IMR-90 (cell line): ENCODE measurements at regions of chr6 and their contacts with region 1.

Region 1: GRCh38 chr6:158072083-158072721 is 90.5 kb downstream of the SYNJ2 start:
- DNase-seq: peak; percentile 76
- ATAC-seq: peak; percentile 76
- H3K4me3 ChIP-seq: no peak overlapping the region
- H3K27ac ChIP-seq: peak overlapping the region; percentile 30; the same call in 1 of the 2 replicates
- H3K4me1 ChIP-seq: peaks cover 17% of the 10 kb centered on the region
- H3K27me3 ChIP-seq: no peaks in the 10 kb centered on the region
- CTCF ChIP-seq: peak; percentile 84
- POLR2A ChIP-seq: peak; percentile 47; the same call in 1 of the 2 replicates
- RAD21 ChIP-seq: peak; percentile 95

Region 2: GRCh38 chr6:157756708-157757429 is 315.3 kb before region 1 on chr6:
- CTCF ChIA-PET with region 1: no interaction called
- POLR2A ChIA-PET with region 1: no interaction called
- dilution Hi-C with region 1: no loop called
- in situ Hi-C with region 1: loop called (anchors 5 kb)
- intact Hi-C with region 1: loop called (anchors 2 kb)
- DNase-seq: peak; percentile 73
- ATAC-seq: peak; percentile 83
- H3K4me3 ChIP-seq: no peak overlapping the region
- H3K27ac ChIP-seq: peak overlapping the region; percentile 40; the same call in 1 of the 2 replicates
- H3K4me1 ChIP-seq: peaks cover 18% of the 10 kb centered on the region
- H3K27me3 ChIP-seq: no peaks in the 10 kb centered on the region; the same call in 1 of the 2 replicates
- CTCF ChIP-seq: peak; percentile 92
- POLR2A ChIP-seq: no peak
- RAD21 ChIP-seq: peak; percentile 92

Region 3: GRCh38 chr6:157912326-157912725 is 159.9 kb before region 1 on chr6:
- CTCF ChIA-PET with region 1: no interaction called
- POLR2A ChIA-PET with region 1: no interaction called
- dilution Hi-C with region 1: no loop called
- in situ Hi-C with region 1: no loop called
- intact Hi-C with region 1: no loop called
- DNase-seq: peak; percentile 95
- ATAC-seq: peak; percentile 89
- H3K4me3 ChIP-seq: no peak overlapping the region
- H3K27ac ChIP-seq: no peak overlapping the region
- H3K4me1 ChIP-seq: peaks cover 7% of the 10 kb centered on the region
- H3K27me3 ChIP-seq: no peaks in the 10 kb centered on the region
- CTCF ChIP-seq: no peak
- POLR2A ChIP-seq: no peak
- RAD21 ChIP-seq: no peak; the same call in 1 of the 2 replicates

Region 4: GRCh38 chr6:157929765-157930319 is 142.4 kb before region 1 on chr6:
- CTCF ChIA-PET with region 1: no interaction called
- POLR2A ChIA-PET with region 1: no interaction called
- dilution Hi-C with region 1: no loop called
- in situ Hi-C with region 1: loop called (anchors 5 kb)
- intact Hi-C with region 1: no loop called
- DNase-seq: no peak
- ATAC-seq: no peak
- H3K4me3 ChIP-seq: no peak overlapping the region
- H3K27ac ChIP-seq: no peak overlapping the region
- H3K4me1 ChIP-seq: no peaks in the 10 kb centered on the region
- H3K27me3 ChIP-seq: no peaks in the 10 kb centered on the region
- CTCF ChIP-seq: no peak
- POLR2A ChIP-seq: no peak
- RAD21 ChIP-seq: no peak

Region 5: GRCh38 chr6:157946865-157947532 is 125.2 kb before region 1 on chr6:
- CTCF ChIA-PET with region 1: interaction called, 3 read pairs
- POLR2A ChIA-PET with region 1: no interaction called
- dilution Hi-C with region 1: no loop called
- in situ Hi-C with region 1: no loop called
- intact Hi-C with region 1: loop called (anchors 5 kb)
- DNase-seq: peak; percentile 10
- ATAC-seq: no peak
- H3K4me3 ChIP-seq: no peak overlapping the region
- H3K27ac ChIP-seq: no peak overlapping the region
- H3K4me1 ChIP-seq: no peaks in the 10 kb centered on the region; the same call in 1 of the 2 replicates
- H3K27me3 ChIP-seq: no peaks in the 10 kb centered on the region
- CTCF ChIP-seq: peak; percentile 22; the same call in 1 of the 2 replicates
- POLR2A ChIP-seq: no peak
- RAD21 ChIP-seq: peak; percentile 31

Region 6: GRCh38 chr6:157981395-157982296 is 90.6 kb before region 1 on chr6 and contains the start of gene SYNJ2:
- CTCF ChIA-PET with region 1: no interaction called
- POLR2A ChIA-PET with region 1: no interaction called
- dilution Hi-C with region 1: no loop called
- in situ Hi-C with region 1: no loop called
- intact Hi-C with region 1: loop called (anchors 1 kb)
- DNase-seq: peak; percentile 83
- ATAC-seq: peak; percentile 92
- H3K4me3 ChIP-seq: peak within 1 kb of the TSS; percentile 73
- H3K27ac ChIP-seq: peak within 1 kb of the TSS; percentile 65
- H3K4me1 ChIP-seq: peaks cover 31% of the 10 kb centered on the region
- H3K27me3 ChIP-seq: no peaks in the 10 kb centered on the region
- CTCF ChIP-seq: peak; percentile 47
- POLR2A ChIP-seq: peak; percentile 78
- RAD21 ChIP-seq: 0 out of 2 replicates have a peak, but pooled peaks have one; percentile 2
- total RNA-seq, gene SYNJ2: 43.3 and 45.2 TPM in 2 replicates